MCF 10A (cell line): ENCODE measurements at regions of chr9 and their contacts with region 1.

Region 1: GRCh38 chr9:100714372-100715099 is 136.7 kb downstream of the CAVIN4 start:
- DNase-seq: peak; percentile 77
- H3K4me3 Mint-ChIP-seq: no peak overlapping the region
- H3K27ac Mint-ChIP-seq: no peak overlapping the region
- H3K4me1 Mint-ChIP-seq: no peaks in the 10 kb centered on the region
- H3K27me3 Mint-ChIP-seq: peaks cover under 1% of the 10 kb centered on the region
- CTCF ChIP-seq: peak; percentile 89

Region 2: GRCh38 chr9:100725371-100725770 is 10.8 kb after region 1 on chr9:
- CTCF ChIA-PET with region 1: interaction called, 12 read pairs
- POLR2A ChIA-PET with region 1: no interaction called
- intact Hi-C with region 1: no loop called
- DNase-seq: no peak
- H3K4me3 Mint-ChIP-seq: no peak overlapping the region
- H3K27ac Mint-ChIP-seq: no peak overlapping the region
- H3K4me1 Mint-ChIP-seq: no peaks in the 10 kb centered on the region
- H3K27me3 Mint-ChIP-seq: peaks cover 42% of the 10 kb centered on the region
- CTCF ChIP-seq: no peak

Region 3: GRCh38 chr9:101235105-101235866 is 520.8 kb after region 1 on chr9:
- CTCF ChIA-PET with region 1: interaction called, 18 read pairs
- POLR2A ChIA-PET with region 1: no interaction called
- intact Hi-C with region 1: loop called (anchors 1 kb)
- DNase-seq: peak; percentile 42
- H3K4me3 Mint-ChIP-seq: no peak overlapping the region
- H3K27ac Mint-ChIP-seq: no peak overlapping the region
- H3K4me1 Mint-ChIP-seq: no peaks in the 10 kb centered on the region
- H3K27me3 Mint-ChIP-seq: peaks cover 2% of the 10 kb centered on the region
- CTCF ChIP-seq: peak; percentile 56

Region 4: DNA sequence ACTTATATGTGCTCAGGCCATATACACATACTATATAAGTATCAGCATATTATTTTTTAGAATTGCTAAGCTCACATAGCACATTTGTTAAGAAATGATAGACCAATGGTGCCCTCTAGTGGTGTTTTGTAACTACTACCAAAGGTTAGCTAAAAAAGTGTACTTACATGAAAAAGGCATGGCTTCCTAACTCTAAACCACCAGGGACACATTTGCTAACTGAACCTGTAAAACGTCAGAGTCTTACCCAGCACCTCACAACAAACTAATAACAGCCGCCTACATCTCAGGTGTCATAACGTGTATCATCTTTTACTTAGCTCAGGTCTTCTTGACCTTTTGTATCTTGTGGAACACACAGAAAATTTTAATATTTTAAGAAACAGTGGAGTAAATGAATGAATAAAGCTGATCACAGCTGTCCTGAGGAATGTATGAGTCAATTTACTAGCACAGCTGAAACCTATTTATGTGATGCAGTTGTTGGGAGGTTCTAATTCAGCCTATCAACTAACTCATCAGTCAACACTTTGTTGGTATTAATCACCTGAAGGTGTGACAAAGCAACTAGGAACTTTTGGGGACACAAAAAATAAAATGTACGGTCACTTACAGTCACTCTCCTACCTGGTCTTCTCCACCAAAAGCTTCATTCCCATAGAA is 597.4 kb after region 1 on chr9:
- CTCF ChIA-PET with region 1: interaction called, 26 read pairs
- POLR2A ChIA-PET with region 1: interaction called, 3 read pairs
- intact Hi-C with region 1: loop called (anchors 1 kb)
- DNase-seq: peak; percentile 84
- H3K4me3 Mint-ChIP-seq: no peak overlapping the region
- H3K27ac Mint-ChIP-seq: no peak overlapping the region
- H3K4me1 Mint-ChIP-seq: peaks cover 7% of the 10 kb centered on the region
- H3K27me3 Mint-ChIP-seq: peaks cover 11% of the 10 kb centered on the region
- CTCF ChIP-seq: peak; percentile 54